PC-9 (cell line): ENCODE measurements at regions of chr4 and their contacts with region 1.

Region 1: DNA sequence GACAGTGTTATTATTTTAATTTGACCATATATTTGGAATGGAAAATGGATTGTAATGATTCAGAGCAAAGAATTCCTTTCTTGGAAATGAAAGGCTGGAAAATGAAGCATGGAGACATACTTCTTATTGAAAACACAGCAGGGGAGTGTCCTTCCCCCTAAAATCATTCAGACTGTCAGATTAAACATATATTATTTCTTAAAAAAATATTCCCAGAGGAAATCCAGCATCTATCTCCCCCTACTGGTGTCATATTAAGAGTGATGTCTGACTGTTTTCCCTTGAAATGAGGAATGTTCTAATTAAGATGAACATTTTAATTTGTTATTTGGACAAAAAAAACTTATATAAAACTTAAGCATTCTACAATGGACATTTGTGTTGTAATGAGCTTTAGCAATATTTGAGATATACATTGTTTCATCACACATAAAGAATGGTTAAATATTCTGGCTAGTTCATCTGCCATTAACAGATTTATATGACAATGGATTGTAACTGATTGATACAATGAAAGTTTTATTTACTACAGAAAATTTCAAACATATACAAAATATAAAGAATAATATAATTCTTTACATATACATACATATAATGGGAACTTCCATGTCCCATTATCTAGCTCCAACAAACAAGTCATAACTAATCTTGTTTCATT is 264.6 kb downstream of the SPRY1 start:
- DNase-seq: no peak
- H3K4me3 ChIP-seq: no peak overlapping the region
- H3K27ac ChIP-seq: no peak overlapping the region
- H3K4me1 ChIP-seq: no peaks in the 10 kb centered on the region
- H3K27me3 ChIP-seq: no peaks in the 10 kb centered on the region
- CTCF ChIP-seq: peak; percentile 89

Region 2: DNA sequence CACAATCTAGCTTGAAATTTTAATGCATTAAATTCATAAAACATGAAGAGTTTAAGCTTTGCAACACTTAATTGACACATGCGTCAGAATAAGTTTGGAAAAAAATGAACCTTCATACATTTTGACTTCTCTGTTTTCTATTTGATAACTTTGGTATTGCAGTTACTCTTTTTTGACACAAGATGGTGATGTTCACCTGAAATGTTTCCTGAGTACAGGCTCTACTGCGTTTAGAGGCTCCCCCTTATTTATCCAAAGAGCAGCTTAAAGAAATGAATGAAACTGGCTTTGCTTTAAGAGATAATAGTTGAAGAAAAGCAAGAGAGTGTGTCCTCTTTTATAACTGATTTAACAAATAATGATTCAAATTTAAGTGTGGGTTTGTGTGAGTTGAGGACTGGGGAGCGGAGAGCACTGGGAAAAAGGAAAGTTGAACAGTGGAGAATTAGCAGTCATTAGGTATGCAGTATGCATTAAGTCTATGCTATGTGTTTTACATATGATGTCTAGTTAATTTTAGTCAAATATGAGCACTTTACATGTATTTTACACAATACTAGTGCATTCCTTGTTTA is 558.2 kb before region 1 on chr4:
- CTCF ChIA-PET with region 1: no interaction called
- POLR2A ChIA-PET with region 1: no interaction called
- intact Hi-C with region 1: loop called (anchors 1 kb)
- DNase-seq: peak in 1 of 2 experiments; percentile 38
- H3K4me3 ChIP-seq: no peak overlapping the region
- H3K27ac ChIP-seq: no peak overlapping the region
- H3K4me1 ChIP-seq: no peaks in the 10 kb centered on the region
- H3K27me3 ChIP-seq: no peaks in the 10 kb centered on the region
- CTCF ChIP-seq: peak; percentile 92

Region 3: GRCh38 chr4:123339507-123340380 is 321.5 kb before region 1 on chr4:
- CTCF ChIA-PET with region 1: no interaction called
- POLR2A ChIA-PET with region 1: no interaction called
- intact Hi-C with region 1: no loop called
- DNase-seq: no peak
- H3K4me3 ChIP-seq: no peak overlapping the region
- H3K27ac ChIP-seq: peak overlapping the region; percentile 72
- H3K4me1 ChIP-seq: peaks cover 18% of the 10 kb centered on the region
- H3K27me3 ChIP-seq: no peaks in the 10 kb centered on the region
- CTCF ChIP-seq: no peak

Region 4: DNA sequence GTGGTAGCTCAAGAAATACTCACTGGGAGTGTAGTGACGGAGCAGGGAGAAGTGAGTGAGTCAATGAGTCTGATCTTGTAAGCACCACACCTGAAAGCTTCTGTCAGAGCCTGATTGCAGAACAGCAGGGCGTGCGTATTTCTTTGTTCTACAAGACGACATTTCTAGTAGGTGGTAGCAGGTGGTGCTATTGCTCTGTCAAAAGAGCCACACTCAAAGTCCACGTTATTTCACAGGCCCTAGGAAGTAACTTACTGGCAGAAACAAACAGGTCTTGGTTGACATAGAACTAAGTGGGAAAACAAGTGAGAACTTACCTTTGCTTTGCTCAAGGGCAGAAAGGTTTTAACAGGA is 311.0 kb before region 1 on chr4:
- CTCF ChIA-PET with region 1: no interaction called
- POLR2A ChIA-PET with region 1: no interaction called
- intact Hi-C with region 1: loop called (anchors 1 kb)
- DNase-seq: peak in 1 of 2 experiments; percentile 40
- H3K4me3 ChIP-seq: no peak overlapping the region
- H3K27ac ChIP-seq: no peak overlapping the region
- H3K4me1 ChIP-seq: no peaks in the 10 kb centered on the region
- H3K27me3 ChIP-seq: no peaks in the 10 kb centered on the region
- CTCF ChIP-seq: peak; percentile 44; the same call in 1 of the 2 replicates

Region 5: GRCh38 chr4:123477711-123478209 is 183.4 kb before region 1 on chr4:
- CTCF ChIA-PET with region 1: no interaction called
- POLR2A ChIA-PET with region 1: no interaction called
- intact Hi-C with region 1: loop called (anchors 1 kb)
- DNase-seq: no peak
- H3K4me3 ChIP-seq: no peak overlapping the region
- H3K27ac ChIP-seq: peak overlapping the region; percentile 96; the same call in 1 of the 2 replicates
- H3K4me1 ChIP-seq: peaks cover 31% of the 10 kb centered on the region
- H3K27me3 ChIP-seq: no peaks in the 10 kb centered on the region
- CTCF ChIP-seq: no peak

Region 6: GRCh38 chr4:123599920-123600810 is 61.0 kb before region 1 on chr4:
- CTCF ChIA-PET with region 1: no interaction called
- POLR2A ChIA-PET with region 1: interaction called, 13 read pairs
- intact Hi-C with region 1: no loop called
- DNase-seq: peak in 1 of 2 experiments; percentile 31
- H3K4me3 ChIP-seq: no peak overlapping the region
- H3K27ac ChIP-seq: no peak overlapping the region
- H3K4me1 ChIP-seq: peaks cover 25% of the 10 kb centered on the region
- H3K27me3 ChIP-seq: no peaks in the 10 kb centered on the region
- CTCF ChIP-seq: no peak

Region 7: DNA sequence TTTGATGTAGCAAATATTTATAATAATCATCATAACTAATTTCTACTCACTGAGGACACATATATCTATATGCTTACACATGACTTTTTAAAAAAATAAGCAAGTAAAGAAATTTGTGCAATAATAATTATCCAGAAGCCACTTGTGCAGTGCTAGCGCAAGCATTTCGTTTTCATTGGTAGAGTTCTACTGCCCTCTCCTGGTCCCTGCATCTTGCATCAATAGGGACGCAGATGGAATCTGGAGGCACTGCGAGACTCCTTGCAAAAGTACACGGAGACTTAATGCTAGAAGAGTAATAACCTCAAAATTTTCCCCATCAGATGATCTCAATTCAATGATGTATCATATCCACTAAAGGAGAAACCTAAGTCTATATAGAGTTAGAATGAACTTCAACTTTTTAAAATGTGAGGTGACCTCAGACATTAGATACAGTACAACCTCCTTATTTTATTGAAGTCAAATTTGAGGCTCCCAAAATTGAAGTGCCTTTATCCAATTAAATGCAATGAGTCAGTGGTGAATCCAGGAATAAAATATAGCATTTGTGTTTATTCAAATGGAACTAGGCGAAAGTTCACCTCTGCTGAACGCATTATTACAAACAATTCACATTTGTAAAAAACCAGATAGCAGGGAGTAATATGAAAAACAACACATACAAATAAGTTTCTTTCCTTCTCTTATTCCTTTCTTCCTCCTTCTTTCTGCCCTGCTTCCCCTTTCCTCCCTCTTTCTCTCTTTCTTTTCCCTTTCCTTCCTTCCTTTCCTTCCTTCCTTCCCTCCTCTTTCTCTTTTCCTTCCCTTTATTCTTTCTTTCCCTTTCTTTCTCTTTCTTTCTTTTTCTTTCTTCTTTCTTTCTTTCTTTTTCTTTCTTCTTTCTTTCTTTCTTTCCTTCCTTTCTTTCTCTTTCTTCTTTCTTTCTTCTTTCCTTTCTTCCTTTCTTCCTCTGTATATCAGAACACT is 601.3 kb after region 1 on chr4:
- CTCF ChIA-PET with region 1: interaction called, 5 read pairs
- POLR2A ChIA-PET with region 1: no interaction called
- intact Hi-C with region 1: loop called (anchors 5 kb)
- DNase-seq: peak; percentile 57 to 71
- H3K4me3 ChIP-seq: no peak overlapping the region
- H3K27ac ChIP-seq: no peak overlapping the region
- H3K4me1 ChIP-seq: no peaks in the 10 kb centered on the region
- H3K27me3 ChIP-seq: no peaks in the 10 kb centered on the region
- CTCF ChIP-seq: peak; percentile 95